PC-9 (cell line): ENCODE measurements at regions of chr9 and their contacts with region 1.

Region 1: GRCh38 chr9:110502842-110503241 is 76.7 kb downstream of the SVEP1 start:
- DNase-seq: no peak
- H3K4me3 ChIP-seq: no peak overlapping the region
- H3K27ac ChIP-seq: no peak overlapping the region
- H3K4me1 ChIP-seq: no peaks in the 10 kb centered on the region
- H3K27me3 ChIP-seq: no peaks in the 10 kb centered on the region
- CTCF ChIP-seq: no peak

Region 2: DNA sequence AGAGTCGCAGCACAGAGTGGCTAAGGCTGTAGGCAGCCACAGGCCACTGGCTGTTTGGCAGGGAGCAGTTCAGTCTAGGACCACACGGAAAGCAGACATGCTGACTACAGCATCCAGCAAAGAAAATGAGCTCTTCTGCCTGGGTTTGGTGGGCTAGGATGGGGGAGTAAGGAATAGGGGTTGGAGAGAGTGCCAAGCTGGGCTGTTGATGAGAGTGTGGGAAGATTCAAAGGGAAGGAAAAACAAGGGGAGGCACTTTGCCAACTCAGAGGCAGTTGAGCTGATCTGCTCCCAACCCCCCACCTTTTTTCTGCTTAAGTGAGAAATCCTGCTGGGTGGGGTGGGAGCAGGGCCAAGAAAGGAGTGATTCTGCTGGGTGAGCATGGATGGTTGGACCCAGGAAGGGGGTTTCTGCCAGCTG is 40.8 kb after region 1 on chr9:
- CTCF ChIA-PET with region 1: no interaction called
- POLR2A ChIA-PET with region 1: no interaction called
- intact Hi-C with region 1: loop called (anchors 1 kb)
- DNase-seq: no peak
- H3K4me3 ChIP-seq: no peak overlapping the region
- H3K27ac ChIP-seq: no peak overlapping the region
- H3K4me1 ChIP-seq: peaks cover 18% of the 10 kb centered on the region
- H3K27me3 ChIP-seq: no peaks in the 10 kb centered on the region
- CTCF ChIP-seq: no peak